ENCODE measurements at regions of chr9 and their contacts with region 1.

Region 1: GRCh38 chr9:34048923-34049697 is 423 bp upstream of the UBAP2 start:
- DNase-seq: peak; percentile 88 to 98
- H3K4me3 ChIP-seq: peak overlapping the region; percentile 75 to 97 (median 91)
- H3K27ac ChIP-seq: peak overlapping the region; percentile 100
- H3K4me1 ChIP-seq: peaks cover 0 to 15% (median 6%) of the 10 kb centered on the region in 4 experiments; a peak in 4 of 7 replicates
- H3K27me3 ChIP-seq: no peaks in the 10 kb centered on the region
- CTCF ChIP-seq: no peak
- EP300 ChIP-seq: 0 out of 3 replicates have a peak, but pooled peaks of 1 of the 2 experiments have one; percentile 16
- POLR2A ChIP-seq: peak; percentile 93 to 98
- RAD21 ChIP-seq: peak in 1 of 2 experiments; percentile 0; a peak in 1 of 4 replicates

Region 2: GRCh38 chr9:33884856-33885701 is 164.0 kb before region 1 on chr9:
- CTCF ChIA-PET with region 1: no interaction called
- POLR2A ChIA-PET with region 1: no interaction called
- DNase-seq: no peak
- H3K4me3 ChIP-seq: no peak overlapping the region
- H3K27ac ChIP-seq: no peak overlapping the region
- H3K4me1 ChIP-seq: peaks cover 0 to 7% (median 4%) of the 10 kb centered on the region in 4 experiments; a peak in 3 of 7 replicates
- H3K27me3 ChIP-seq: no peaks in the 10 kb centered on the region
- CTCF ChIP-seq: no peak
- EP300 ChIP-seq: no peak
- POLR2A ChIP-seq: no peak
- RAD21 ChIP-seq: no peak

Region 3: GRCh38 chr9:33924978-33925797 is 123.9 kb before region 1 on chr9:
- CTCF ChIA-PET with region 1: no interaction called
- POLR2A ChIA-PET with region 1: interaction called, 10 read pairs
- DNase-seq: peak; percentile 29 to 73
- H3K4me3 ChIP-seq: no peak overlapping the region
- H3K27ac ChIP-seq: peak overlapping the region; percentile 38; the same call in 1 of the 2 replicates
- H3K4me1 ChIP-seq: peaks cover 0 to 2% (median 0%) of the 10 kb centered on the region in 4 experiments; a peak in 2 of 7 replicates
- H3K27me3 ChIP-seq: no peaks in the 10 kb centered on the region
- CTCF ChIP-seq: peak; percentile 68 to 79 (median 78)
- EP300 ChIP-seq: no peak
- POLR2A ChIP-seq: no peak
- RAD21 ChIP-seq: peak; percentile 54 to 70

Region 4: GRCh38 chr9:34001951-34002350 is 47.2 kb before region 1 on chr9:
- CTCF ChIA-PET with region 1: no interaction called
- POLR2A ChIA-PET with region 1: no interaction called
- DNase-seq: no peak
- H3K4me3 ChIP-seq: no peak overlapping the region
- H3K27ac ChIP-seq: no peak overlapping the region
- H3K4me1 ChIP-seq: no peaks in the 10 kb centered on the region
- H3K27me3 ChIP-seq: no peaks in the 10 kb centered on the region
- CTCF ChIP-seq: no peak
- EP300 ChIP-seq: no peak
- POLR2A ChIP-seq: no peak
- RAD21 ChIP-seq: no peak

Region 5: GRCh38 chr9:34025062-34025461 is 24.0 kb before region 1 on chr9:
- CTCF ChIA-PET with region 1: interaction called, 5 read pairs
- POLR2A ChIA-PET with region 1: interaction called, 21 read pairs
- DNase-seq: no peak
- H3K4me3 ChIP-seq: no peak overlapping the region
- H3K27ac ChIP-seq: no peak overlapping the region
- H3K4me1 ChIP-seq: no peaks in the 10 kb centered on the region
- H3K27me3 ChIP-seq: no peaks in the 10 kb centered on the region
- CTCF ChIP-seq: no peak
- EP300 ChIP-seq: no peak
- POLR2A ChIP-seq: no peak
- RAD21 ChIP-seq: no peak

Region 6: GRCh38 chr9:34032631-34033030 is 16.5 kb before region 1 on chr9:
- CTCF ChIA-PET with region 1: interaction called, 7 read pairs
- POLR2A ChIA-PET with region 1: interaction called, 13 read pairs
- DNase-seq: no peak
- H3K4me3 ChIP-seq: no peak overlapping the region
- H3K27ac ChIP-seq: no peak overlapping the region
- H3K4me1 ChIP-seq: no peaks in the 10 kb centered on the region
- H3K27me3 ChIP-seq: no peaks in the 10 kb centered on the region
- CTCF ChIP-seq: no peak
- EP300 ChIP-seq: no peak
- POLR2A ChIP-seq: no peak
- RAD21 ChIP-seq: no peak

Region 7: GRCh38 chr9:34084562-34084961 is 35.5 kb after region 1 on chr9:
- CTCF ChIA-PET with region 1: interaction called, 3 read pairs
- POLR2A ChIA-PET with region 1: interaction called, 14 read pairs
- DNase-seq: no peak
- H3K4me3 ChIP-seq: no peak overlapping the region
- H3K27ac ChIP-seq: no peak overlapping the region
- H3K4me1 ChIP-seq: no peaks in the 10 kb centered on the region
- H3K27me3 ChIP-seq: no peaks in the 10 kb centered on the region
- CTCF ChIP-seq: no peak
- EP300 ChIP-seq: no peak
- POLR2A ChIP-seq: no peak
- RAD21 ChIP-seq: no peak